PC-3 (cell line): ENCODE measurements at regions of chrX and their contacts with region 1.

Region 1: GRCh38 chrX:13506574-13506973 is 62.8 kb upstream of the EGFL6 start:
- DNase-seq: peak; percentile 62
- ATAC-seq: no peak
- H3K4me3 ChIP-seq: no peak overlapping the region
- H3K27ac ChIP-seq: no peak overlapping the region
- H3K4me1 ChIP-seq: no peaks in the 10 kb centered on the region
- H3K27me3 ChIP-seq: no peaks in the 10 kb centered on the region
- CTCF ChIP-seq: peak; percentile 76

Region 2: DNA sequence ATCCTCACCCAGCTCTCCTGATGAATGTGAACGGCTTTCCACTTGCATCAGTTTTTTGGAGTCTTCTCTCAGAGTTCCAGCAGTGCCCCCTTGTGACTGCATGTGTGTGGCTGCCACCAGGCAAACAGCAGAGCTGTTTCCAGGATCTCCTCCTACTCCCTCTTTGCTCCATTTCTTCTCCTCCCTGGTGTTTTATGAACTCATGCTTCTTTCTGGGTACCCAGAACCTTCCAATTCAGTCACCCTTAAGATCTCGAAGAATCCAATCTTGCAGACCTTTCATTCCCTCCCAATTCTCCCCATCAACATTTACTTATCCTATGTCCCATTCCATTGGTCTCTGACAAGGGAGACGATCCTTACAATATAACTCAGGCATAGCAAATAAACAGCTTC is 139.6 kb after region 1 on chrX:
- CTCF ChIA-PET with region 1: interaction called, 23 read pairs
- POLR2A ChIA-PET with region 1: no interaction called
- intact Hi-C with region 1: loop called (anchors 1 kb)
- DNase-seq: peak; percentile 66
- ATAC-seq: peak; percentile 85
- H3K4me3 ChIP-seq: no peak overlapping the region
- H3K27ac ChIP-seq: no peak overlapping the region
- H3K4me1 ChIP-seq: peaks cover 6% of the 10 kb centered on the region; the same call in 1 of the 2 replicates
- H3K27me3 ChIP-seq: no peaks in the 10 kb centered on the region
- CTCF ChIP-seq: peak; percentile 85

Region 3: DNA sequence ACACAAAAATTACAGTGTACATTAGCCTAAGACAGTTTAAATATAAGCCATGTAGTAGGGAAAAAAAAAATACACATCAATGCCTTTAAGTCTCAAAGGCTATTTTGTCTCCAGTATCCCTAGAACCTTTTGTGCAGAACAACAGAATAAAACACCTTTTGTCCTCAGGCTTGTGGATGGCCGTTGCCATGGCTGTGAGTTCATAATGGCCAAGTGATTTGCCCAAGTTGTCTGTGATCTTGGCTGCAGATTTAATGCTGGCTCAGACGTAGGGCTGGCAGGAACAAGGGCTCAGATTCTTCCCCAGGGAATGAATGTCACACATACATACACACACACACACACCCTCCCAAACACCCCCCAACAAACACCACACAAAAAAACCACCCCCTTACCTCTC is 285.0 kb after region 1 on chrX:
- CTCF ChIA-PET with region 1: no interaction called
- POLR2A ChIA-PET with region 1: no interaction called
- intact Hi-C with region 1: no loop called
- DNase-seq: no peak
- ATAC-seq: no peak
- H3K4me3 ChIP-seq: no peak overlapping the region
- H3K27ac ChIP-seq: no peak overlapping the region
- H3K4me1 ChIP-seq: no peaks in the 10 kb centered on the region; the same call in 1 of the 2 replicates
- H3K27me3 ChIP-seq: no peaks in the 10 kb centered on the region
- CTCF ChIP-seq: no peak